GM12878 (cell line): ENCODE measurements at regions of chr7 and their contacts with region 1.

Region 1: GRCh38 chr7:93921607-93922566 is at the start of gene GNG11:
- DNase-seq: no peak
- ATAC-seq: peak; percentile 84
- H3K4me3 ChIP-seq: peak within 1 kb of the TSS; percentile 61
- H3K27ac ChIP-seq: peak within 1 kb of the TSS; percentile 24; the same call in 1 of the 2 replicates
- H3K4me1 ChIP-seq: no peaks in the 10 kb centered on the region
- H3K27me3 ChIP-seq: no peaks in the 10 kb centered on the region
- CTCF ChIP-seq: peak in 1 of 3 experiments; percentile 21; a peak in 1 of 6 replicates
- EP300 ChIP-seq: no peak
- POLR2A ChIP-seq: no peak
- RAD21 ChIP-seq: no peak
- polyA plus RNA-seq, gene GNG11: 2.0 to 2.3 TPM

Region 2: DNA sequence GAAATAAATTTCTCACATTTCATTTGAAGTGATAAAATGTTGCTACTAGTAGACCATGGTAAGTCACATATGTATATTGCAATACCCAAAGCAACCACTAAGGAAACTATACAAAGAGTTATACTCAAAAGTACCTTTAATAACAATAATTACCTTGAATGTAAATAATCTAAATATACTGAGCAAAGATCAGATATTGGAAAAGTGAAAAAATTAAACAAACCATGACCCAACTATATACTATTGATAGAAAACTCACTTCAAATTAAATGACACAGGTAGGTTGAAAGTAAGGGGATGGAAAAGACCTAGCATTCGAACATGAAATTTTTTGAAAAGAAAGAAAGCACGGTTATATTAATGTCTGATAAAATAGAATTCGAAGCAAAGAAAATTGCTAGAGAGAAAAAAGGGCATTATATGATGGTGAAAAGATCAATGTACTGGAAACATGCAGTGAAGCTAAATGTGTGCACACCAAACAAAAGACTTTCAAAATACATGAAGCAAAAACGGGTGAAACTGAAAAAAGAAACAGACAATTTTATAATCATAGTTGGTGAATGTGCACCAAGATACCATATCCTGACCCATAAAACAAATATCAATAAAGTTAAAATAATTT is 60.5 kb before region 1 on chr7:
- CTCF ChIA-PET with region 1: no interaction called
- POLR2A ChIA-PET with region 1: no interaction called
- RAD21 ChIA-PET with region 1: no interaction called
- SMC1A ChIA-PET with region 1: no interaction called
- in situ Hi-C with region 1: no loop called
- intact Hi-C with region 1: loop called (anchors 10 kb)
- DNase-seq: no peak
- ATAC-seq: peak; percentile 51; the same call in 1 of the 3 replicates
- H3K4me3 ChIP-seq: no peak overlapping the region
- H3K27ac ChIP-seq: no peak overlapping the region
- H3K4me1 ChIP-seq: no peaks in the 10 kb centered on the region
- H3K27me3 ChIP-seq: no peaks in the 10 kb centered on the region
- CTCF ChIP-seq: no peak
- EP300 ChIP-seq: no peak
- POLR2A ChIP-seq: no peak
- RAD21 ChIP-seq: no peak

Region 3: GRCh38 chr7:93902777-93903423 is 19.0 kb before region 1 on chr7:
- CTCF ChIA-PET with region 1: interaction called, 13 read pairs
- POLR2A ChIA-PET with region 1: no interaction called
- RAD21 ChIA-PET with region 1: no interaction called
- SMC1A ChIA-PET with region 1: interaction called, 3 read pairs
- in situ Hi-C with region 1: no loop called
- intact Hi-C with region 1: no loop called
- DNase-seq: no peak
- ATAC-seq: peak; percentile 56
- H3K4me3 ChIP-seq: no peak overlapping the region
- H3K27ac ChIP-seq: no peak overlapping the region
- H3K4me1 ChIP-seq: no peaks in the 10 kb centered on the region
- H3K27me3 ChIP-seq: no peaks in the 10 kb centered on the region
- CTCF ChIP-seq: peak; percentile 66 to 72 (median 69)
- EP300 ChIP-seq: no peak
- POLR2A ChIP-seq: no peak
- RAD21 ChIP-seq: peak; percentile 86

Region 4: DNA sequence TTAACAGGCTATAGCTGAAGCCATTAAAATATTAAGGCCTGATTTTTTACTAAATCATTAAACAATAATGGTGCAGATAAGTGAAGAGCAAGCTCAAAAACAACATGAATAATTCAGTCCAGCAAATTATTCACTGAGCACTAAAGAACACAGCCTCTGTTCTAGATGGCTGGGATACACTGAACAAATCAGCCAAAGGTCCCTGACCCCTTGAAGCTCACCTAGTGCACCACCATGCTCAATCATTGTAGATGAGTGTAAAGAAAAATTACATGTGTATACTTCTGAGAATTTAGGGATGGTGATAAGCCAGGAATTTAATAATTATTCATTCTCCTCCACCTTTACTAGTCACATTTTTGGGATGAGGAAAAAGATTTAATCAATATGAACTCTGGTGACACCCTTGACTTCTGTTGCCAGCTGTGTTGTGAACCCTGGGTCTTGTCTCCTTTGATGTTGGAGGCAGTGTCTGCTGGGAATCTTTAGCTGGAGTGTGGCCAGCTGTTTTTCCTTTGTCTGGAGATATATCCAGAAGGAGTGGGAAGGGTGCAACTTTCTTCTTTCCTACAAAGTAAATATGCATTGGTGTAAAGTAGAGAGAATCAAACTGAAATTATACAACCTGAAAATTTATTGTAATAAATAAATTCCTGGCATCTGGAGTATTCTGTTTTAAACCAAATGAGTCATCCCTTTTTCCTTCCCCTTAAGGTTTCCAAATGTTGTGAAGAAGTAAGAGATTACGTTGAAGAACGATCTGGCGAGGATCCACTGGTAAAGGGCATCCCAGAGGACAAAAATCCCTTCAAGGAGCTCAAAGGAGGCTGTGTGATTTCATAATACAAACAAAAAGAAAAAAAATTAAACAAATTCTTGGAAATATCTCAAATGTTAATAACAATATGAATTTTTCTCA is 11.6 kb before region 1 on chr7:
- CTCF ChIA-PET with region 1: interaction called, 3 read pairs
- POLR2A ChIA-PET with region 1: no interaction called
- RAD21 ChIA-PET with region 1: interaction called, 4 read pairs
- SMC1A ChIA-PET with region 1: interaction called, 11 read pairs
- in situ Hi-C with region 1: no loop called
- intact Hi-C with region 1: no loop called
- DNase-seq: no peak
- ATAC-seq: no peak
- H3K4me3 ChIP-seq: no peak overlapping the region
- H3K27ac ChIP-seq: no peak overlapping the region
- H3K4me1 ChIP-seq: no peaks in the 10 kb centered on the region
- H3K27me3 ChIP-seq: no peaks in the 10 kb centered on the region
- CTCF ChIP-seq: no peak
- EP300 ChIP-seq: no peak
- POLR2A ChIP-seq: no peak
- RAD21 ChIP-seq: no peak

Region 5: DNA sequence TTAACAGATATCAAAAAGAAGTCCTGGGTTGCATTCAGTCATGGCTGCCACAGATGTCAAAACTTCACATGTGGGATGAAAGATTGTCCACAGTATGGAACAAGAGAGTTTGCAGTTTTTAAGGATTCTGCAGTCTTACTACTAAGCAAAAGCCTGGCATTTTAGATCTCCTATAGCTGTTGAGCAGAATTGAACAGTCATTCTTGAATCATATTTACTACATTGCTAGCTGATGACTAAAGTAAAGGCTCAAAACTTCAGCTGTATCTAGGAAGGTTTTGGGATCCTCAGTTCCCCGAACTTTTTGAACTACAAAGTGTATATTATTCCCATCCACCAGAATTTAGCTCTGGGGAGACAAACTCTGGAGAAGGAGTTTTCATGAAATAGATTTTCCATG is 51.2 kb after region 1 on chr7:
- CTCF ChIA-PET with region 1: no interaction called
- POLR2A ChIA-PET with region 1: no interaction called
- RAD21 ChIA-PET with region 1: no interaction called
- SMC1A ChIA-PET with region 1: no interaction called
- in situ Hi-C with region 1: no loop called
- intact Hi-C with region 1: no loop called
- DNase-seq: no peak
- ATAC-seq: no peak
- H3K4me3 ChIP-seq: no peak overlapping the region
- H3K27ac ChIP-seq: no peak overlapping the region
- H3K4me1 ChIP-seq: no peaks in the 10 kb centered on the region
- H3K27me3 ChIP-seq: no peaks in the 10 kb centered on the region
- CTCF ChIP-seq: no peak
- EP300 ChIP-seq: no peak
- POLR2A ChIP-seq: no peak
- RAD21 ChIP-seq: no peak